ENCODE measurements at regions of chr3 and their contacts with region 1.

Region 1: GRCh38 chr3:139202226-139202958 is 141.4 kb upstream of the MRPS22 start:
- DNase-seq: peak; percentile 59 to 72
- H3K4me3 ChIP-seq: no peak overlapping the region
- H3K27ac ChIP-seq: no peak overlapping the region
- H3K4me1 ChIP-seq: no peaks in the 10 kb centered on the region
- H3K27me3 ChIP-seq: no peaks in the 10 kb centered on the region
- CTCF ChIP-seq: no peak

Region 2: GRCh38 chr3:138694287-138695007 is 507.9 kb before region 1 on chr3:
- CTCF ChIA-PET with region 1: no interaction called
- POLR2A ChIA-PET with region 1: no interaction called
- intact Hi-C with region 1: loop called (anchors 2 kb)
- DNase-seq: peak; percentile 52 to 94
- H3K4me3 ChIP-seq: no peak overlapping the region
- H3K27ac ChIP-seq: peak overlapping the region; percentile 71
- H3K4me1 ChIP-seq: peaks cover 26% of the 10 kb centered on the region
- H3K27me3 ChIP-seq: no peaks in the 10 kb centered on the region
- CTCF ChIP-seq: no peak

Region 3: DNA sequence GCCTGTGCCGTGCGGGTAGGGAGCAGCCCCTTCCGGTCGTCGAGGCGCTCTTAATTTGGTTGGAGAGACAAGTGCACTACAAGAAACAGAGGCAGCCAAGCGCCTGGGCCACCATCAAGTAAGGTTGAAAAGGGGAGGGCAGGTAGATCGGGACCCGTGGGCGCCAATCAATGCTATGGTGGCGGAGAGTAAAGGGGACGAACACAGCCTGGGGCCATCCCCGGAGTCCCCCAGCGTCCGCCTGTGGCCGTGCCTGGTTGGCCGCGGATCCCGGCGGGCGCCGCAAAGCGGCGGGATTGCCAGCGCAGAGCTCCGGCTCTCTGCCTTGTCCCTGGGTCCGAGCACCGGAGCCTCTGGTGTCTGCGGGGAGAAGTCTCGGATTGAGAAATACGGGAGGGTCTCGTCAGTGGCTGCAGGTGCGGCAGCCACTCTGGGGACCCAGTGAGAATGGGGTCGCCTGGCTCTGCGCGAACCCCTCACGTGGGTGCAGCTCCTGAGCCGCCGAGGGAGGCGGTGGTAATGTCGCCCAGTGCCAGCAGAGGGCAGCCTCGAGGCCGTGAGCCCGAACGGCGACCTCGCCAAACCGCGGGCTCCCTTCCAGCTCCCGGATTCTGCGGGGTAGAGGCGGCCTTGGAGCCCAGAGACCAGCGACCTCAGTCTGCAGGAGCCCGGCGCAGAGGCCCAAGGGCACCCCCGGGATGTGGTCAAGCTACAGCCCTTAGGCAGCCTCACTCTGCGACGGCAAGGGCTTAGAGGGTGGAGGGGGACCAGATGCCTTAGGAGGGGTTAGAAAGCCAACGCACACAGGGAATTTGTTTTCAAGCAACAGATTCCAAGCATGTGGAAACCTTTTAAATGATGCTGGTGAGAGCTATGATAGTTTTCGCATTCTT is 266.3 kb before region 1 on chr3:
- CTCF ChIA-PET with region 1: no interaction called
- POLR2A ChIA-PET with region 1: no interaction called
- intact Hi-C with region 1: loop called (anchors 1 kb)
- DNase-seq: peak in 1 of 2 experiments; percentile 81
- H3K4me3 ChIP-seq: peak overlapping the region; percentile 76
- H3K27ac ChIP-seq: no peak overlapping the region
- H3K4me1 ChIP-seq: 0 out of 2 replicates have a peak, but pooled peaks cover 6% of the 10 kb centered on the region
- H3K27me3 ChIP-seq: no peaks in the 10 kb centered on the region
- CTCF ChIP-seq: peak; percentile 88

Region 4: DNA sequence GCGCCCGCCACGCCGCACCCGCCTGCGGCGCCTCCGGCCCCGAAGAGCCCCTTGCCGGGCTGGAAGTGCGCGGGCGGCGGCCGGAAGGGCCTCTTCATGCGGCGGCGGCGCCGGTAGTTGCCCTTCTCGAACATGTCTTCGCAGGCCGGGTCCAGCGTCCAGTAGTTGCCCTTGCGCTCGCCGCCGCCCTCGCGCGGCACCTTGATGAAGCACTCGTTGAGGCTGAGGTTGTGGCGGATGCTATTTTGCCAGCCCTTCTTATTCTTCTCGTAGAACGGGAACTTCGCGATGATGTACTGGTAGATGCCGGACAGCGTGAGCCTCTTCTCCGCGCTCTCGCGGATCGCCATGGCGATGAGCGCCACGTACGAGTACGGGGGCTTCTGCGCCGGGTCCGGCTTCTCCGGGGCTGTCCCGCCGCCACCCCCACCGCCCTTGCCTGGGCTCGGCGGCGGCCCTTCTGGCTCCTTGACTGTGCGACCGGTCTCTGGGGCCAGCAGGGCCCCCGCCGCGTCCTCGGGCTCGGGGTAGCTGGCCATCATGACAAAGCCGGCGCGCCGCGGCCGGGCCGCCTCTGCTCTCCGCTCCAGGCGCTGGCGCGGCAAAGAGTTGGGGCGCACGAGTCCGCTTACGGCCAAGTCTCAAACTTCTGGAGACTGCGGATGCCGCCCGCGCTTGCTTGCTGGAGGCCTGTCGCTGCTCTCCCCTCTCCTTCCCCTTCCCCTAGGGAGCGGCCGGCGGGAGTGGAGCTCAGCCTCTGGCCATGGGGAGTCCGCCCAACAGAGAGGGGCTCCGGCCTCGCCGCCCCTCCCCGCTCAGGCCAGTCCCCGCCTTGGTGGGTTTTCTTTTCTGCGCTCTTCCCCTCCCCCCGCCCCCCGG is 256.0 kb before region 1 on chr3:
- CTCF ChIA-PET with region 1: no interaction called
- POLR2A ChIA-PET with region 1: no interaction called
- intact Hi-C with region 1: no loop called
- DNase-seq: no peak
- H3K4me3 ChIP-seq: no peak overlapping the region
- H3K27ac ChIP-seq: no peak overlapping the region
- H3K4me1 ChIP-seq: no peaks in the 10 kb centered on the region
- H3K27me3 ChIP-seq: 0 out of 2 replicates have a peak, but pooled peaks cover 6% of the 10 kb centered on the region
- CTCF ChIP-seq: no peak

Region 5: DNA sequence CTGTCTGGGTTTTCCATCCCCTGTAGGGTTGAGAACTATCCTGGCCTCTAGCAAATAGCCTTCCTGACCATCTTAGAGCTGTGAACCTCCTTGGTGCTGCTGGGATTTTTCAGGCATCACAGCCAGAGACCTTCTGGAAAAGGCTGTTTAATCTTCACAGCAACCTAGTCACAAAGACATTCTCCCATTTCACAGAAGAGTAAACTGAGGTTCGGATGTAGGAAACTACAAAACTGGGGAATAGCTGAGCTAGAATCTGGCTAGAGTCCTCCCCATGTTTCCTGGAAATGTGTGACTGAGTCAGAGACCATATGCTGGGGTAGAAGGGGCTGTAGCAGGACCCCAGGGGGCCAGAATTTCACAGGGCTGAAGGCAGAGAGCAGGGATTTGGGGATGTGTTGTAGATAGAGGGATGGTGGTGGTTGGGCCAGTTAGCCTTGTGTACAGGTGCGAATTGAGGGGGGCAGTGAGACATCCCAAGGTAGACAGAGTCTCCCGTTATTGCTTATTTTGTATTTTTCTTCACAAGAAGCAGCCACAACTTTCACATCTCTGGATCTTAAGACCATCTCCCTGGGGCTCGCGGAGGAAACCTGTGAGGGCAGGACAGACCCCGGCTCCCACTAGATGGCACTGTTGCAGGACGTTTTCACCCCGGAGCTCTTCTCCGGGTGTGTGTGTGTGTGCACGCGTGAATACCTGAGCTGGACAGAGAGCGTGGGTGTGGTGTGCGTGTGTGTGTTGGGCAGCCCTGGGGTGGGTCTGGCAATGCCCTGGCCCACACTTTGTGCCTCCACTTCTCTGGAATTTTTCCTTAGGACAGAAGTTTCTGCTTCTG is 90.8 kb before region 1 on chr3:
- CTCF ChIA-PET with region 1: no interaction called
- POLR2A ChIA-PET with region 1: no interaction called
- intact Hi-C with region 1: loop called (anchors 5 kb)
- DNase-seq: peak in 1 of 2 experiments; percentile 67
- H3K4me3 ChIP-seq: no peak overlapping the region
- H3K27ac ChIP-seq: no peak overlapping the region
- H3K4me1 ChIP-seq: no peaks in the 10 kb centered on the region
- H3K27me3 ChIP-seq: 0 out of 2 replicates have a peak, but pooled peaks cover 6% of the 10 kb centered on the region
- CTCF ChIP-seq: peak; percentile 77

Region 6: GRCh38 chr3:139241783-139242182 is 39.4 kb after region 1 on chr3:
- CTCF ChIA-PET with region 1: no interaction called
- POLR2A ChIA-PET with region 1: no interaction called
- intact Hi-C with region 1: no loop called
- DNase-seq: no peak
- H3K4me3 ChIP-seq: no peak overlapping the region
- H3K27ac ChIP-seq: no peak overlapping the region
- H3K4me1 ChIP-seq: no peaks in the 10 kb centered on the region
- H3K27me3 ChIP-seq: no peaks in the 10 kb centered on the region
- CTCF ChIP-seq: 0 out of 2 replicates have a peak, but pooled peaks have one; percentile 18

Region 7: GRCh38 chr3:139302084-139302800 is 99.8 kb after region 1 on chr3:
- CTCF ChIA-PET with region 1: no interaction called
- POLR2A ChIA-PET with region 1: no interaction called
- intact Hi-C with region 1: loop called (anchors 1 kb)
- DNase-seq: peak; percentile 91 to 97
- H3K4me3 ChIP-seq: peak overlapping the region; percentile 22; the same call in 1 of the 2 replicates
- H3K27ac ChIP-seq: peak overlapping the region; percentile 71
- H3K4me1 ChIP-seq: peaks cover 52% of the 10 kb centered on the region
- H3K27me3 ChIP-seq: no peaks in the 10 kb centered on the region
- CTCF ChIP-seq: no peak

Region 8: GRCh38 chr3:139434764-139435307 is 232.4 kb after region 1 on chr3:
- CTCF ChIA-PET with region 1: no interaction called
- POLR2A ChIA-PET with region 1: no interaction called
- intact Hi-C with region 1: no loop called
- DNase-seq: peak; percentile 34 to 86
- H3K4me3 ChIP-seq: no peak overlapping the region
- H3K27ac ChIP-seq: peak overlapping the region; percentile 48
- H3K4me1 ChIP-seq: peaks cover 17% of the 10 kb centered on the region
- H3K27me3 ChIP-seq: no peaks in the 10 kb centered on the region
- CTCF ChIP-seq: no peak

Region 9: GRCh38 chr3:139540651-139541151 is 338.3 kb after region 1 on chr3:
- CTCF ChIA-PET with region 1: no interaction called
- POLR2A ChIA-PET with region 1: no interaction called
- intact Hi-C with region 1: no loop called
- DNase-seq: no peak
- H3K4me3 ChIP-seq: peak overlapping the region; percentile 67
- H3K27ac ChIP-seq: no peak overlapping the region
- H3K4me1 ChIP-seq: peaks cover 43% of the 10 kb centered on the region
- H3K27me3 ChIP-seq: no peaks in the 10 kb centered on the region
- CTCF ChIP-seq: no peak

Measured in PC-9 (cell line).